Gastrocnemius medialis (tissue), 4 donors: ENCODE measurements at regions of chr7 and their contacts with region 1.

Region 1: DNA sequence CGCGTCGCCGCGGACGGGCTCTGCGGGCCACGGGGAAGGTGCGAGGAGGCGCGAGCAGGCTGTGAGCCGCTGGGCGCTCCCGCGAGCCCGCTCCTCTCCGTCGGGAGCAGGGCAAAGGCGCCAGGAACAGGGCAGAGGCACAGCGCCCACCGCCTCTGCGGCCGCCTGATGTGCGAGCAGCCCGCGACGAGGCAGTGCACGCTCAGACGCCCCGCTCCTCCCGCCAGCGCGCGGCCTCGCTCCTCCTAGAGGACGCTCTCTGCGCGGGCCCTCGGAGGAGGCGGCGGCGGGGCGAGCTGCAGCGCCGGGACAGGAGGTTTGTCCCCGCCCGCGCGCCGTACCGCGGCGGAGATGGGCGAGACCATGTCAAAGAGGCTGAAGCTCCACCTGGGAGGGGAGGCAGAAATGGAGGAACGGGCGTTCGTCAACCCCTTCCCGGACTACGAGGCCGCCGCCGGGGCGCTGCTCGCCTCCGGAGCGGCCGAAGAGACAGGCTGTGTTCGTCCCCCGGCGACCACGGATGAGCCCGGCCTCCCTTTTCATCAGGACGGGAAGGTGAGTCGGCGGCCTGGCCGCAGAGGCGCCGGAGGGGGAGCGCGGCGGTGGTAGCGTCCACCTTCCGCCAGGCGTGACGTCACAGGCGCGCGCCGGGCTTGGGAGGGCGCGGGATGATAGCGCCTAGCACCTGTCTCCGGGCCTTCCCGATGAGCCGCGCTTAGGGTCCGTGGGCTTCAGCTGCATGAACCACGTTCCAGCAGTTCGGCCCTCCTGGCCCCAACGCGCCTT is 731 bp downstream of the LANCL2 start:
- DNase-seq: peak; percentile 87 to 93
- ATAC-seq: peak; percentile 94 to 96
- H3K4me3 ChIP-seq: peak overlapping the region; percentile 86 to 99 (median 91)
- H3K27ac ChIP-seq: peak overlapping the region; percentile 97 to 99 (median 98)
- H3K4me1 ChIP-seq: peaks cover 11 to 23% of the 10 kb centered on the region in 2 donors
- H3K27me3 ChIP-seq: no peaks in the 10 kb centered on the region
- CTCF ChIP-seq: peak in 3 of 5 experiments; percentile 23 to 54 (median 37)
- POLR2A ChIP-seq: peak; percentile 66 to 71

Region 2: GRCh38 chr7:54758702-54759592 is 606.9 kb before region 1 on chr7 and contains the start of gene SEC61G:
- in situ Hi-C with region 1: loop called in 2 of 4 experiments (anchors 25 kb)
- intact Hi-C with region 1: loop called (anchors 1 kb)
- DNase-seq: peak; percentile 94 to 95
- ATAC-seq: peak; percentile 97 to 99
- H3K4me3 ChIP-seq: peak within 1 kb of the TSS; percentile 86 to 100 (median 93)
- H3K27ac ChIP-seq: peak within 1 kb of the TSS; percentile 79 to 92 (median 89)
- H3K4me1 ChIP-seq: peaks cover 22 to 23% of the 10 kb centered on the region in 2 donors
- H3K27me3 ChIP-seq: no peaks in the 10 kb centered on the region
- CTCF ChIP-seq: no peak
- POLR2A ChIP-seq: peak; percentile 74 to 85
- total RNA-seq, gene SEC61G: 133 to 292 (median 165) TPM

Region 3: DNA sequence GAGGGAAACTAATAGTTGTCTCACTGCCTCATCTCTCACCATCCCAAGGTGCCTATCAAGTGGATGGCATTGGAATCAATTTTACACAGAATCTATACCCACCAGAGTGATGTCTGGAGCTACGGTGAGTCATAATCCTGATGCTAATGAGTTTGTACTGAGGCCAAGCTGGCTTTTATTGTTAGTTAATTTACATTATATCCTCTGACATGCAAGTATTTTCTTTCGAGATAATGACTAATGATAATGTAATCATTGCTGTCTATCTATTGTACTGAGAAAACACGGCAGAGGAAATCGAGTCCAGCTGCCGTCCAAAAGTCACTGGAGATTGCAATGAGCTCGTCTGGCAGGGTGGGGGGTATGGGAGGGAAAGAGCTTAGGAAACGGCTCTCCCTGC is 173.2 kb before region 1 on chr7:
- in situ Hi-C with region 1: no loop called
- intact Hi-C with region 1: no loop called
- DNase-seq: no peak
- ATAC-seq: no peak
- H3K4me3 ChIP-seq: no peak overlapping the region
- H3K27ac ChIP-seq: peak overlapping the region in 2 of 4 donors; percentile 13 to 14
- H3K4me1 ChIP-seq: peaks cover 0 to 6% of the 10 kb centered on the region in 2 donors
- H3K27me3 ChIP-seq: no peaks in the 10 kb centered on the region
- CTCF ChIP-seq: no peak
- POLR2A ChIP-seq: no peak

Region 4: DNA sequence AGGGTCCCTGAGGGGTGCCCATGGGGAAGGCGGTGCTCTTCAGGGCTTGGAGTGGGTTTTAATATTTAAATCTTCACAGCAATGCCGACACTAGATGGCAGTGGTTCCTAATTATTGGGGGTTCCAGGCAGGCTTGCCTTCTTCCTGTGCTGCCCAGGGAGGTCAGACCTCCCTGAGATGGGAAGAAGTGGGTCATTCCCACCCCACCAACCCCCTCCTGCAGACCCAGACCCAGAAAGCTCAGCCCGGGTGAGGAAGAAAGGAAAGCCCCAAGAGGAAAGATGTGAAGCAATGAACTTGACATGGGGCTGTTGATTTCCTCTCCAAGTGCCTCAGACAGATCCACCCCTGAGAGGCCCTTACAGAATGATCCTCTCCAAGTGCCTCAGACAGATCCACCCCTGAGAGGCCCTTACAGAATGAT is 85.8 kb before region 1 on chr7:
- in situ Hi-C with region 1: no loop called
- intact Hi-C with region 1: loop called (anchors 5 kb)
- DNase-seq: peak; percentile 17 to 30
- ATAC-seq: peak; percentile 85 to 86
- H3K4me3 ChIP-seq: no peak overlapping the region
- H3K27ac ChIP-seq: no peak overlapping the region
- H3K4me1 ChIP-seq: no peaks in the 10 kb centered on the region
- H3K27me3 ChIP-seq: no peaks in the 10 kb centered on the region
- CTCF ChIP-seq: peak; percentile 51 to 73 (median 66)
- POLR2A ChIP-seq: no peak

Region 5: GRCh38 chr7:55415173-55415778 is 49.4 kb after region 1 on chr7:
- in situ Hi-C with region 1: no loop called
- intact Hi-C with region 1: loop called (anchors 2 kb)
- DNase-seq: peak; percentile 53 to 64
- ATAC-seq: peak in 1 of 2 donors; percentile 73
- H3K4me3 ChIP-seq: no peak overlapping the region
- H3K27ac ChIP-seq: no peak overlapping the region
- H3K4me1 ChIP-seq: no peaks in the 10 kb centered on the region
- H3K27me3 ChIP-seq: no peaks in the 10 kb centered on the region
- CTCF ChIP-seq: peak; percentile 66 to 88 (median 78)
- POLR2A ChIP-seq: no peak

Region 6: DNA sequence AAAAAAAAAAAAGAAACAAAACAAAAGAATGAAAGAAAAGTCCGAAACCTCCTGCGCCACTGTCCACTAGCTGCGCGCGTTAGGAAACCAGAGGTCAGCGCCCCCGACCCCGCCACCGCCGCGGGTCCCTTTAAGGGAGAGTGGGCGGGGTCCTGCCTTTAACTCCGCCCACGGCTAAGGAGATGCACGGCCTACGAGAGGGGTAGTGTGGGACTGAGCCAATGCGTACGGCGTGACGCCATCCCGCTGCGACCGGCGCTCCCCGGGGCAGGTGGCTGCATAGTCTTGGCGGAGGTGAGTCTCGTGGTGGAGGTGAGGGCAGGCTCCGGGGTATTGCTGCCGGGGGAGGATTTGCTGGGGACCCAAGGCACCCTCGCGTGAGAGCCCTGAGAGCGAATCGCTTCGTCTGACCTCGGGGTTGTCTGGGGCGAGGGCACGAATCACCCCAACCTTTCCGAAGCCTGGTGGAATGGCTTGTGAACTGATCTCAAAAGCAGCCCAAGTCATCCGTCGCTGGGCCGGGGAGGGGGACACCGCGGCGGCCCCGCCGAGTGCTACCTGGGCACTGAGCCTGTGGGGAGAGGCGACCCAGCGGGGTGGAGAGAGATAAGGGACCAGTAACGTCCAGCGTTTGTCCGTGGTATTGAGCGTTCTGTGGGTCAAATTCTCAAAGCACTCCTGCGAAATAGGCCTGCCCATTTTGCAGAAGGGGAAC is 585.9 kb after region 1 on chr7 and contains the start of gene MRPS17:
- in situ Hi-C with region 1: no loop called
- intact Hi-C with region 1: loop called (anchors 5 kb)
- DNase-seq: peak; percentile 82 to 91
- ATAC-seq: peak; percentile 98 to 99
- H3K4me3 ChIP-seq: peak within 1 kb of the TSS; percentile 78 to 99 (median 82)
- H3K27ac ChIP-seq: peak within 1 kb of the TSS; percentile 86 to 90 (median 88)
- H3K4me1 ChIP-seq: peaks cover 9 to 12% of the 10 kb centered on the region in 2 donors
- H3K27me3 ChIP-seq: no peaks in the 10 kb centered on the region
- CTCF ChIP-seq: peak in 1 of 5 experiments; percentile 36
- POLR2A ChIP-seq: peak; percentile 74 to 76
- total RNA-seq, gene MRPS17: 14.0 to 38.3 (median 22.0) TPM

Region 7: DNA sequence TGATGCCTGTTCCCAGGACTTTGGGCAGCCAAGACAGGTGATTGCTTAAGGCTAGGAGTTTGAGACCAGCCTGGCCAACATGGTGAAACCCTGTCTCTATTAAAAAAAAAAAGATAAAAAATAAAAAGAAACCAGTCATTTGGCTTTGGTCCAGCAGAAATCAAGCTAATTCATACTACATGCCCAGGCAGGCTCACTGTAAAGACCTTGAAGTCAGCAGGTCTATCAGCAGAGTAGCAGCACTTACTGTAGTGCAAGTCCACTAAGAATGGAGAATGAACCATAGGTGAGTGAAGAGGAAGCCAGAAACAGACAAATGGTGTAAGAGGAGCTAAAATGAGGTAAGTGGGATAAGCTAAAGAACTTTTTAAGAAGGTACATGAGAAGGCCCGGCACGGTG is 660.7 kb after region 1 on chr7:
- in situ Hi-C with region 1: no loop called
- intact Hi-C with region 1: no loop called
- DNase-seq: no peak
- ATAC-seq: no peak
- H3K4me3 ChIP-seq: no peak overlapping the region
- H3K27ac ChIP-seq: no peak overlapping the region
- H3K4me1 ChIP-seq: peaks cover 0 to 4% of the 10 kb centered on the region in 2 donors
- H3K27me3 ChIP-seq: no peaks in the 10 kb centered on the region
- CTCF ChIP-seq: no peak
- POLR2A ChIP-seq: no peak

Region 8: DNA sequence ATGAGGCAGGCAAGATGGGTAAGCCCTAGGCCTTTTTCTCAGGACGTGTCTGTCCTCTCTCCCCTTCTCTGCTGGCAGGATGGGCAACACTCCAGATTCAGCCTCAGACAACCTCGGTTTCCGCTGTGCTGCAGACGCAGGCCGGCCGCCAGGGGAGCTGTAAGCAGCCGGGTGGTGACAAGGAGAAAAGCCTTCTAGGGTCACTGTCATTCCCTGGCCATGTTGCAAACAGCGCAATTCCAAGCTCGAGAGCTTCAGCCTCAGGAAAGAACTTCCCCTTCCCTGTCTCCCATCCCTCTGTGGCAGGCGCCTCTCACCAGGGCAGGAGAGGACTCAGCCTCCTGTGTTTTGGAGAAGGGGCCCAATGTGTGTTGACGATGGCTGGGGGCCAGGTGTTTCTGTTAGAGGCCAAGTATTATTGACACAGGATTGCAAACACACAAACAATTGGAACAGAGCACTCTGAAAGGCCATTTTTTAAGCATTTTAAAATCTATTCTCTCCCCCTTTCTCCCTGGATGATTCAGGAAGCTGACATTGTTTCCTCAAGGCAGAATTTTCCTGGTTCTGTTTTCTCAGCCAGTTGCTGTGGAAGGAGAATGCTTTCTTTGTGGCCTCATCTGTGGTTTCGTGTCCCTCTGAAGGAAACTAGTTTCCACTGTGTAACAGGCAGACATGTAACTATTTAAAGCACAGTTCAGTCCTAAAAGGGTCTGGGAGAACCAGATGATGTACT is 713.8 kb after region 1 on chr7:
- in situ Hi-C with region 1: loop called in 1 of 4 experiments (anchors 25 kb)
- intact Hi-C with region 1: loop called (anchors 5 kb)
- DNase-seq: peak; percentile 91 to 96
- ATAC-seq: peak; percentile 65 to 75
- H3K4me3 ChIP-seq: no peak overlapping the region
- H3K27ac ChIP-seq: peak overlapping the region; percentile 94 to 99 (median 95)
- H3K4me1 ChIP-seq: peaks cover 62 to 72% of the 10 kb centered on the region in 2 donors
- H3K27me3 ChIP-seq: no peaks in the 10 kb centered on the region
- CTCF ChIP-seq: peak; percentile 86 to 90 (median 90)
- POLR2A ChIP-seq: no peak